ENCODE measurements at regions of chr18 and their contacts with region 1.

Region 1: GRCh38 chr18:12883684-12884405 is at the start of gene PTPN2:
- DNase-seq: peak; percentile 78 to 98 (median 91)
- ATAC-seq: peak; percentile 86
- H3K4me3 ChIP-seq: peak within 1 kb of the TSS; percentile 77 to 95
- H3K4me3 Mint-ChIP-seq: peak within 1 kb of the TSS; percentile 88
- H3K27ac ChIP-seq: peak within 1 kb of the TSS; percentile 99 to 100
- H3K27ac Mint-ChIP-seq: peak within 1 kb of the TSS; percentile 94
- H3K4me1 ChIP-seq: peaks cover 49% of the 10 kb centered on the region
- H3K4me1 Mint-ChIP-seq: peaks cover 58% of the 10 kb centered on the region
- H3K27me3 ChIP-seq: no peaks in the 10 kb centered on the region
- H3K27me3 Mint-ChIP-seq: no peaks in the 10 kb centered on the region
- CTCF ChIP-seq: no peak
- total RNA-seq, gene PTPN2: 61.7 to 62.8 TPM

Region 2: DNA sequence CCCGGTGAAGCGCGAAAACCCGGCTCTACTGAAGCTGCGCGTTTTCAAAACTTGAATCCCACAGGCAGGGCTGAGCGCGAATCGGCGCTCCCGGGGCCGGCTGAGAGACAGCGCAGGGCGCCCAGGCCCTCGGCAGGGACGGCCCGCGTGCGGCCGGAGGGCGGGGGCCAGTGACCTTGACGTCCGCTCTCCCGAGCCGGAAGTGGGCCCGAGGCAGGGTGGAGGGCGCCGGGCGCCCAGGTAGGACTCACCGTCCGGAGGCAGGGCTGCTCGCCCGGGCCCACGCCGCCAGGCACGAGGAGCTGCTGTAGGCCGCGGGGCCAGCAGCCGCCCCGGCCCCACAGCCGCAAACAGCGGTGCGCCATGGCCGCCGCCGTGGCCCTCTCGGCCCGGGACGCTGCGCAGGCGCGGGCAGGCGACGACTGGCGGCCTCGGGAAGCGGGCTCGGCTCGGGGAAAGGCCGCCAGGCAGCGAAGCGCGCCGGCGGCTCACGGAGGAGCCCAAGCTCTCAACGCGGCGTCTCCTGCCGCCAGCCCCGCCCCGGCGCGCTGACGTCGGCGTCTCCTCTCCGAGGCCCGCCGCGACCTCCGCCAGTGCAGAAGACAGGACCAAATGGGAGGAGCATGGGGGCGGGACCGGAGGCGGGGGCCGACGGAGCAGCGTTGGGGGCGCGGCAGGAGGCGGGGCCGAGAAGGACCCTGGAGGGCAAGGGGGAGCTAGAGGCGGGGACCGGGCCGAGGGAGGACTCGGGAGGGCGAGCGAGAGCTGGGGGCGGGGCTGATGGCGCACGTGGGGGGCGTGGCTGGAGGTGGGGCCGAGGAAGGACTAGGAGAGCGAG is 506.9 kb before region 1 on chr18 and contains the start of gene AFG3L2:
- CTCF ChIA-PET with region 1: no interaction called
- POLR2A ChIA-PET with region 1: interaction called, 15 read pairs
- intact Hi-C with region 1: loop called (anchors 1 to 2 kb)
- DNase-seq: peak; percentile 100
- ATAC-seq: peak; percentile 88
- H3K4me3 ChIP-seq: peak within 1 kb of the TSS; percentile 81 to 92
- H3K4me3 Mint-ChIP-seq: peak within 1 kb of the TSS; percentile 88
- H3K27ac ChIP-seq: peak within 1 kb of the TSS; percentile 87 to 92
- H3K27ac Mint-ChIP-seq: peak within 1 kb of the TSS; percentile 93
- H3K4me1 ChIP-seq: peaks cover 40% of the 10 kb centered on the region
- H3K4me1 Mint-ChIP-seq: peaks cover 48% of the 10 kb centered on the region
- H3K27me3 ChIP-seq: no peaks in the 10 kb centered on the region
- H3K27me3 Mint-ChIP-seq: no peaks in the 10 kb centered on the region
- CTCF ChIP-seq: no peak
- total RNA-seq, gene AFG3L2: 58.4 to 59.0 TPM

Region 3: DNA sequence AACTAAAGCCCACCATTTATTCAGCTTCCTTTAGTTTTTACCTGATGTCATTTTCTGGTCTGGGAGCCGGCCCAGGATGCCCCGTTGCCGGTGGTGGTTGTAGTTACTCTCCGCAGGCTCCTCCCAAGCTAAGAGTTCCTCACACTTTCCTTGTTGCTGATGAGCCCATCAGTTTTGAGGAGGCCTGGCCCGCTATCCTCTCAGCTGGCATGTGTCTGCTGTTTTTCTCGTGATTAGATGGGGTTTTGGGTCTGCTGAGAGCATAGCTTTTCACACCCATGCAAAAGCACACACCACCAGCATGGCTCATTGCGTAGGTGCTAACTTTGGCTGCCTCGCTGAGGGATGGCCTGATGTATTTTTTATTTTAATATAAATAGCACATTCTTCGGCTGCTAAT is 108.9 kb before region 1 on chr18:
- CTCF ChIA-PET with region 1: no interaction called
- POLR2A ChIA-PET with region 1: interaction called, 26 read pairs
- intact Hi-C with region 1: loop called in 1 of 2 experiments (anchors 2 kb)
- DNase-seq: peak in 5 of 9 experiments; percentile 7 to 79 (median 30)
- ATAC-seq: peak; percentile 62
- H3K4me3 ChIP-seq: peak overlapping the region; percentile 63
- H3K4me3 Mint-ChIP-seq: peak overlapping the region; percentile 87
- H3K27ac ChIP-seq: peak overlapping the region; percentile 71 to 76
- H3K27ac Mint-ChIP-seq: peak overlapping the region; percentile 94
- H3K4me1 ChIP-seq: no peaks in the 10 kb centered on the region
- H3K4me1 Mint-ChIP-seq: peaks cover 28% of the 10 kb centered on the region
- H3K27me3 ChIP-seq: no peaks in the 10 kb centered on the region
- H3K27me3 Mint-ChIP-seq: no peaks in the 10 kb centered on the region
- CTCF ChIP-seq: no peak

Region 4: DNA sequence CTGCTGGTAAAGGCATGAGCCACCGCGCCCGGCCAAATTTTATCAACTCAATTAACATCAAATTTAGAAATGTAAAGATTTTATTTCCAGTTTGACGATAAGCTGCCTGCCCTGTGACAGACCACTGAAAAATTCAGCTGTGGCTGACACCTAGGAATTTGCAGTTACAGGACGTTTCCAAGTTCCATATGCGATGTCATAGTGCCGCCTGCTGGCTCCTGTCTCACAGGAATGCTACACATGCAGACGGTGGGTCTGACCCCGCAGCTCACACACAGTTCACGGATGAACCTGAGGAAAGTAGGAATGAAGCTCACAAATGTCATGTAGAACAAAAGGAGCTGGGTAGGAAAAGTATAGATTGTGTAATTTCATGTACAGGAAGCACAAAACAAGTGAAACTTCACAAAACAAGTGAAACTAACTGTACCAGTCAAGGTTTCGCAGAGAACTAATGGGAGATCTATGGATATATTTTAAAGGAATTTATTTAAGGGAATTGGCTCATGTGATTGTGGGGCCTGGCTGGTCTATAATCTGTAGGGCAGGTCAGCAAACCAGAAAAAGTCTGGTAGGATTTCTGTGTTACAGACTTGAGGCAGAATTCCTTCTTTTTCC is 50.7 kb after region 1 on chr18:
- CTCF ChIA-PET with region 1: interaction called, 10 read pairs
- POLR2A ChIA-PET with region 1: interaction called, 9 read pairs
- intact Hi-C with region 1: no loop called
- DNase-seq: peak; percentile 63 to 89 (median 80)
- ATAC-seq: peak; percentile 90
- H3K4me3 ChIP-seq: no peak overlapping the region
- H3K4me3 Mint-ChIP-seq: no peak overlapping the region
- H3K27ac ChIP-seq: no peak overlapping the region
- H3K27ac Mint-ChIP-seq: no peak overlapping the region
- H3K4me1 ChIP-seq: no peaks in the 10 kb centered on the region
- H3K4me1 Mint-ChIP-seq: peaks cover 12% of the 10 kb centered on the region
- H3K27me3 ChIP-seq: no peaks in the 10 kb centered on the region
- H3K27me3 Mint-ChIP-seq: peaks cover 4% of the 10 kb centered on the region
- CTCF ChIP-seq: peak; percentile 95

Region 5: DNA sequence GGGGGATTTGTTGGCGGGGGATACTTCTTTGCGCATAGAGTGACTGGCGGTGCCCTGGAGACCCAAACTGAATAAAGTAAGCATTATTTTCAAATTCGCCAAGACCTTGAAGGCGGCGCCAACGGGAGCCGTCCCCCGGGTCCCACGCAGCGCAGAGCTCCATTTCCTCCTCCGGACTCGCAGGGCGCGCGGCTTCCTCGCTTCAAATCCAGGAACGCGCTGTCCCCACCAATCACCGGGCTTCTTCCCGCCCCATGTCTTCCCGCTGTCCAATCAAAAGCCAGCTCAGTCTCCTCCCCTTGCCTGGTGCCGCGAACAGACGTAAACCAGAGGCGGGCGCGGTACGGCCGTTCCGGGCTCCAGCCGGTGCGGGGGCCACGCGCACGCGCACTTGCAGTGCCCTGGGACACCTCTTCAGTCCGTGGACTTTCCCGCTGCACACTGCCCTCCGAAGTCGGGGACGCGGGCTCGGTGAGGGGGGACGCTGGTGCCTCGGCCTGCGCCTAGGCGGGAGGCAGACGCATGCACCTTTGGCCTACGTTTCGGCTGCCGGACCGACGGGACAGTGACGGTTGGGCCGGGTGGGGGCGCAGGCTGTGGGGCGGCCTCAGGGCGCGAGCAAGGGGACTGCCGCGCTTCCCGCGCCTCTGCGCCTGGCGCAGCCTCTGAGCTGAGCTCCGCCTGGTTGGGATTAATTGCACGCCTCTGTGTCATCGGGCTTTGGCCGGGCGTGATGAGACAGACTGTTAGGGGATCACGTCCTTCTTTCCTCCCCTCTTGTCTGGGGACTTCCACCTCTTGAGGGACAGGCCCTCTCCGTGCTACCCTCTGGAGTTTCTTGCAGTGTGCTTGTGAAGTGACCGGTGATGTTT is 107.4 kb after region 1 on chr18 and contains the start of gene CEP192:
- CTCF ChIA-PET with region 1: no interaction called
- POLR2A ChIA-PET with region 1: interaction called, 4 read pairs
- intact Hi-C with region 1: loop called (anchors 1 kb)
- DNase-seq: peak; percentile 94 to 99 (median 97)
- ATAC-seq: peak; percentile 96
- H3K4me3 ChIP-seq: peak within 1 kb of the TSS; percentile 79 to 90
- H3K4me3 Mint-ChIP-seq: peak within 1 kb of the TSS; percentile 98
- H3K27ac ChIP-seq: peak within 1 kb of the TSS; percentile 57 to 75
- H3K27ac Mint-ChIP-seq: peak within 1 kb of the TSS; percentile 97
- H3K4me1 ChIP-seq: peaks cover 27% of the 10 kb centered on the region
- H3K4me1 Mint-ChIP-seq: peaks cover 17% of the 10 kb centered on the region
- H3K27me3 ChIP-seq: no peaks in the 10 kb centered on the region
- H3K27me3 Mint-ChIP-seq: no peaks in the 10 kb centered on the region
- CTCF ChIP-seq: no peak
- total RNA-seq, gene CEP192: 22.8 to 24.3 TPM

Region 6: GRCh38 chr18:13353084-13353823 is 469.4 kb after region 1 on chr18:
- CTCF ChIA-PET with region 1: no interaction called
- POLR2A ChIA-PET with region 1: no interaction called
- intact Hi-C with region 1: no loop called
- DNase-seq: peak in 2 of 9 experiments; percentile 45 to 53
- ATAC-seq: peak; percentile 55
- H3K4me3 ChIP-seq: no peak overlapping the region
- H3K4me3 Mint-ChIP-seq: peak overlapping the region; percentile 15
- H3K27ac ChIP-seq: peak overlapping the region in 1 of 2 experiments; percentile 36
- H3K27ac Mint-ChIP-seq: peak overlapping the region; percentile 92
- H3K4me1 ChIP-seq: peaks cover 12% of the 10 kb centered on the region
- H3K4me1 Mint-ChIP-seq: peaks cover 27% of the 10 kb centered on the region
- H3K27me3 ChIP-seq: no peaks in the 10 kb centered on the region
- H3K27me3 Mint-ChIP-seq: no peaks in the 10 kb centered on the region
- CTCF ChIP-seq: no peak

Region 7: DNA sequence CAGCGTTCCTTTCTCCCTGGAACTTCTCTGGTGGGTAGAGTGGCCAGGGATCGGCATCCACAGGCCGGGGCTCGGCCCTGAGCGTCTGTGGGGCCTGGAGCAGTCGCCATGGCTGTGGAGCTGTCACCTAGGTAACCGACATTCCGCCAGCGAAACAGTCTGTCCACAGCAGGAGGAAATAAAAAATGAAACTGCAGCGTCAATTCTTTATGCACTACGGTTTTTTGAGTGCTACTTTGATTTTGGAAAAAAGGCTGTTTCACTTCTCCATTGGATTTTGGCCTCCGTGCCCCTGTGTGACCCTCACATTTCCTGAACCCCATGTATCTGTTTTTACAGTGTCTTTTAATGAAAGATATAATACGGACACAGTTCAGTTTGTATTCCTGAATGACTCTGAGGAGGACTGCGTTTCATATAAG is 498.1 kb after region 1 on chr18:
- CTCF ChIA-PET with region 1: no interaction called
- POLR2A ChIA-PET with region 1: no interaction called
- intact Hi-C with region 1: no loop called
- DNase-seq: peak in 6 of 9 experiments; percentile 41 to 74 (median 51)
- ATAC-seq: peak; percentile 46
- H3K4me3 ChIP-seq: peak overlapping the region; percentile 32 to 57
- H3K4me3 Mint-ChIP-seq: peak overlapping the region; percentile 83
- H3K27ac ChIP-seq: peak overlapping the region; percentile 76 to 94
- H3K27ac Mint-ChIP-seq: peak overlapping the region; percentile 95
- H3K4me1 ChIP-seq: peaks cover 57% of the 10 kb centered on the region
- H3K4me1 Mint-ChIP-seq: peaks cover 65% of the 10 kb centered on the region
- H3K27me3 ChIP-seq: no peaks in the 10 kb centered on the region
- H3K27me3 Mint-ChIP-seq: no peaks in the 10 kb centered on the region
- CTCF ChIP-seq: no peak

Region 8: GRCh38 chr18:14144628-14144895 is 1260.7 kb after region 1 on chr18:
- CTCF ChIA-PET with region 1: no interaction called
- POLR2A ChIA-PET with region 1: no interaction called
- intact Hi-C with region 1: loop called in 1 of 2 experiments (anchors 10 kb)
- DNase-seq: no peak
- ATAC-seq: no peak
- H3K4me3 ChIP-seq: no peak overlapping the region
- H3K4me3 Mint-ChIP-seq: no peak overlapping the region
- H3K27ac ChIP-seq: no peak overlapping the region
- H3K27ac Mint-ChIP-seq: no peak overlapping the region
- H3K4me1 ChIP-seq: no peaks in the 10 kb centered on the region
- H3K4me1 Mint-ChIP-seq: no peaks in the 10 kb centered on the region
- H3K27me3 ChIP-seq: no peaks in the 10 kb centered on the region
- H3K27me3 Mint-ChIP-seq: no peaks in the 10 kb centered on the region
- CTCF ChIP-seq: no peak

Measured in CD8-positive, alpha-beta T cell (primary cell).